HepG2 (cell line): ENCODE measurements at regions of chr12 and their contacts with region 1.

Region 1: DNA sequence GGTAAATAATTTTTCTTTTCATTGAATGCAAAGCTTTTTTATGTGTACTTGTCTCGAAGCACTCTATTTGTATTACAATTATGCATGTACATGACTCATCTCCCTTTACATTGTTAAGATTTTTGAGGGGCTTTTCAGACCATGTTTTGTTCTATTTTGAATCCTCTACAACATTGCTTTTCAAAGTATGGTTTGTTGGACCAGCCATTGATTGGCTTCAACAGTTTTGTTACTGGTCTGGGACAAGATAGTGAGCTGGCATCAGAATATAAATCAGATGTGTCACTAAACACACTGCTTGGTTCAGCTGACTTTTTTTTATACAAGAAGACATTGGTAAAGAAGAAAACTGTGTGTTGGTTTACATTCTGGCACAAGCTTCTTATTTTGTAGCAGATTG is 122.3 kb downstream of the MON2 start:
- DNase-seq: peak; percentile 38
- ATAC-seq: no peak
- H3K4me3 ChIP-seq: no peak overlapping the region
- H3K27ac ChIP-seq: no peak overlapping the region
- H3K4me1 ChIP-seq: no peaks in the 10 kb centered on the region
- H3K27me3 ChIP-seq: no peaks in the 10 kb centered on the region; a peak in 1 of 5 replicates
- CTCF ChIP-seq: no peak
- EP300 ChIP-seq: no peak
- POLR2A ChIP-seq: no peak
- RAD21 ChIP-seq: no peak

Region 2: GRCh38 chr12:62319058-62319457 is 269.9 kb before region 1 on chr12:
- CTCF ChIA-PET with region 1: no interaction called
- POLR2A ChIA-PET with region 1: no interaction called
- in situ Hi-C with region 1: no loop called
- intact Hi-C with region 1: no loop called
- DNase-seq: no peak
- ATAC-seq: no peak
- H3K4me3 ChIP-seq: no peak overlapping the region
- H3K27ac ChIP-seq: no peak overlapping the region
- H3K4me1 ChIP-seq: peaks cover 10% of the 10 kb centered on the region
- H3K27me3 ChIP-seq: no peaks in the 10 kb centered on the region
- CTCF ChIP-seq: no peak
- EP300 ChIP-seq: no peak
- POLR2A ChIP-seq: no peak
- RAD21 ChIP-seq: no peak

Region 3: DNA sequence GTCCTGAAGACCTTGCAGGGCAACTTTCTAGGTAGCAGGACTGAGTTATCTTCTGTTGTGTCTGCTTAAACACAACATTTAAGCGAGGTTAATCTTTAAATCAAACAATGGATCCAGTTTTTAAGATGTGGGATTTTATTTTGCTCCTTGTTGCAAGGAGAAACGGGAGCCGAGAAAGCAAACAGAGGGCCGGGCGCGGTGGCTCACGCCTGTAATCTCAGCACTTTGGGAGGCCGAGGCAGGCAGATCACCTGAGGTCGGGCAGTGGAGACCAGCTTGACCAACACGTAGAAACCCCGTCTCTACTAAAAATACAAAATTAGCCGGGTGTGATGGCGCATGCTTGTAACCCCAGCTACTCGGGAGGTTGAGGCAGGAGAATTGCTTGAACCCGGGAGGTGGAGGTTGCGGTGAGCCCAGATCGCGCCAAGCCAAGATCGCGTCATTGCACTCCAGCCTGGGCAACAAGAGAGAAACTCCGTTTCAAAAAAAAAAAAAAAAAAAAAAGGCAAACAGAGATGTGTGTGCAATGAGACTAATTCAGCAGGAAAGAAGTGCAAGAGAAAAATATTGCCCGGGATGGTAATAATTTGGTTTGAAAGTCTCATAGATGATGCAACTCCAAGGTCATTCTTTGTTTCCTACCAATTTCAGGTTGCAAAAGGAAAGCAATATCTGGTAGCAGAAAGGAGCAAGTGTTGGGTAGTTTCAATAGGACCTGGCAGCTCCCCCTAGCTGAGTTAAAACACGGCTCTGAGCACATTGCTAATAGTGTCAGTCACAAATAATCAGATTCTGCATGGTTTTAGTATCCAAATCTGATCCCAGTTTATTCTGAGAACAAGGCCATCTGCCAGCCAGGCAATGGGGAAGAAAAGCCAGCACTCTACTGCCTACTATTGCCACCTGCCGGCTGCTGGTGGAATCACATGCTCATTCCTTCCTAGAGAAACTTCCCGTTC is 204.6 kb after region 1 on chr12:
- CTCF ChIA-PET with region 1: no interaction called
- POLR2A ChIA-PET with region 1: no interaction called
- in situ Hi-C with region 1: loop called (anchors 5 kb)
- intact Hi-C with region 1: no loop called
- DNase-seq: peak; percentile 51
- ATAC-seq: peak; percentile 59
- H3K4me3 ChIP-seq: no peak overlapping the region
- H3K27ac ChIP-seq: no peak overlapping the region
- H3K4me1 ChIP-seq: peaks cover 13% of the 10 kb centered on the region
- H3K27me3 ChIP-seq: no peaks in the 10 kb centered on the region
- CTCF ChIP-seq: peak; percentile 85
- EP300 ChIP-seq: no peak
- POLR2A ChIP-seq: no peak
- RAD21 ChIP-seq: peak; percentile 58